Sciatic nerve (tissue), 2 donors: ENCODE measurements at regions of chr10 and their contacts with region 1.

Region 1: GRCh38 chr10:10233229-10233628 is 784.4 kb upstream of the CELF2 start:
- DNase-seq: no peak
- ATAC-seq: no peak

Region 2: DNA sequence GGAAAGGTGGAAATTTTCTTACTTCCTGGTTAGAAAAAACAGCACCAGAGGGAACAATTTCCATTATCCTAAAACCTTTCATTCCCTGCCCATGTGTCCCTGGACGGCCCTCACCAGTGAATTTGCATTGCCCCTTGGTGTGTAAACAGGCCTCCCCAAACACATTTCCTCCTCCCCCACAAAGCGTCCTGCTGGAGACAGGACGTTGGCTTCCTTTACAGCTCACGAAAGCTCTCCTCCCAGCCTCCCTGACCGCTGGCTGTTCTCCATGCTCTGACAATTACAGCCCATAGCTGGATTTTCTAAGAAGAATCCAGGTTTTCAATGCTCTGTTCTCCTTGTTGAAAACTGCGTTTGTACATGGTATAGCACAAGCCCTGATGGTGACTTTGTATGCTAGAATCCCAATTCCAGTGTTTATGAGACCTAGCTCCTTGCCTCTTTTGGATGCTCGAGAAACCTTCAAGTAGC is 60.3 kb after region 1 on chr10:
- intact Hi-C with region 1: loop called (anchors 2 kb)
- DNase-seq: no peak
- ATAC-seq: peak; percentile 52